ENCODE measurements at regions of chr2 and their contacts with region 1.

Region 1: DNA sequence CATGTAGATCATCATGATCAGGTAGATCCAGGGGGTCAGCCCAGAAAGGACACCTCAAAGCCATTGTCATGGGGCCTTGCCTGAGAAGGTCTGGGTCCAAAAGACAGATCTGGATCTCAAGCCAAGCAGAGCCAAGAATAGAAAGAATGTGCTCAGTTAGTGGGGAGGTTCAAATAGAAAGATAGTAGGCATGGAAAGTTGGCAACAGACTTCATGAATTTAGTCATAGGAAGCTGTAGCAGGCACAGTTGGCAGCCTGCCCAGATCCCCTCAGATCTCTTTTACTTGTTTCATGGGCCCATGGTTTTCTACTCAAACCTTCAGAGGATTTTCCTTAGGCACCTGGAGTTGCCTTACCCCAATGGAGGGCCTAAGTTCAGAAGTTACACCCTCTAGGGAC is 767.0 kb downstream of the SLC4A3 start:
- DNase-seq: no peak

Region 2: GRCh38 chr2:220127311-220127710 is 267.1 kb before region 1 on chr2:
- intact Hi-C with region 1: loop called (anchors 10 kb)
- DNase-seq: no peak

Region 3: GRCh38 chr2:220445429-220446105 is 51.1 kb after region 1 on chr2:
- intact Hi-C with region 1: no loop called
- DNase-seq: no peak

Region 4: DNA sequence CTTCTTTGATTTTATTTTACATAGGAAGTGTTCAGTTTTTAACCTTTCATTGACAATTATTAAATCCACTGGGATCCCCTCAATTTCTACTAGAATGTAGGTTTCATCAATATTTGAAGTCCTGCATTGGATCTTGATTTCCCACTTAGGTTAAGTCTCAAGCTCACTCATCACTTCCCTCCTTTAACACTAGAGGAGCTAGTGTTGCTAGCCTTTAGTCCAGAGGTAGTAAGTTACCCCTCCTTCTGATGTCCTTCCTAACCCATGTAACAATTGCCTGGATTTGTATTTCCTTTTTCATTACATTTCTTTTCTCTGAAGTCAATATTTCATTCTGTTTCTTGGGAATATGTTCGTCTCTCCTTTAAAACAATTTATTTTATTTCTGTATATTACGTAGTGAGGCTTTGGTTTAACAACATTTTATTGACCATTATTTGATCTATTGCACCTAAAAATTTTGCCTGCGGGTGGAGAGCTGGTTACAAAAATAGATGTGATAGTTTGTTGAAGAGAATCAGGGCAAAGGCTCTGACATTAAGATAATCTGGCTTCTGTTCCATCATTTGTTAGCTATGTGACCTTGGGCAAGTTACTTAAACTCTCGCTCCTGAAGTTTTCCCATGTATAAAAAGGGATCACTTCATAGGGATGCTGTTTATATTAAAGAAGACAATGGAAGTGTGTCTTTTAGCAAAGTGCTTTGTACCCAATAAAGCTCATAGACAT is 66.0 kb after region 1 on chr2:
- intact Hi-C with region 1: no loop called
- DNase-seq: no peak